ENCODE measurements at regions of chr9 and their contacts with region 1.

Region 1: DNA sequence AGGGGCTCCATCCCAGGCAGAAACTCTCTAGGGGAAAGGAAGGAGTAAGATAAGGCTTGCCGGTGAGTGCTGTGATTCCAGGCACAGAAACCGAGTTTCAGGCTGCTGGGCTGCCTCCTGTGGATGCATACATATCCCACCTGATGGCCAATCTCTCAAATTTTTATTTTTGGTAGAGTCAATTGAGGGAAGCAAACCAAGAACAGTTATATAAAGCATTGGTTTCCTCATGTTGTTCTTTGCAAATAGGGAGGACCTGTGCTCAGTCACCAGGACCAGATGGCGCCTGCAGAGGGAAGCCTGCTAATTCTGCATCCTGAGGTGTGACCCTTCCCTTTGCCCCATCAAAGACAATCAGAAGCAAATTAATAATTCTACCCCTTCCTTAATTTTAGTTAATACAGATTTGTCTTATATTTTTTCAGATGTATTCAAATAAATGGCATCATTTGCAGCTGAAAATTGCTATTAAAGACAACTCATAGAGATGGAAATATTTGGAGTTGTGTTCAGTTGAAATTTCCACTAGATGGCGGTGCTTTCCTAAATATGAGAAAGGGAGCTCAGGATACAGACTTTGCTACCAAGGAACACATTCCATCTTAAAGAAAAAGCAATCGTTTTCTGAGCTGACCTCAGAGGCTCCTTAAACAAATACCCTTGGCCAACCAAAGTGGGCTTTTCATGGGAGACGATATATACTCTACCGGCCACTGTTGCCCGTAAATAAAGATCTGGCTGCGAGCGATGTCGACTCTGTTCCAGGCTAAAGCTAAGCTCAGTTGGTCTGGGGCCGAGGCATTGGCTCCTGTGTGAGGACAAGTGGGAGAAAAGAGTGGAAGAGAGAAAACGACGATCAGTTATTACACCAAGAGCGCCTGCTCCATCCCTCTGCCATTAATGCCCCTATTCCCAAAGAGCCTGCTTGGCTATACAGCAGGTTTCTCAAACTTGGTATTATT is 225.7 kb upstream of the KLF9 start:
- DNase-seq: no peak
- H3K4me3 ChIP-seq: no peak overlapping the region
- H3K27ac ChIP-seq: no peak overlapping the region
- H3K4me1 ChIP-seq: no peaks in the 10 kb centered on the region
- H3K27me3 ChIP-seq: peaks cover 0 to 9% (median 0%) of the 10 kb centered on the region in 4 donors
- CTCF ChIP-seq: peak in 5 of 6 experiments; percentile 43 to 63 (median 51)
- POLR2A ChIP-seq: no peak

Region 2: GRCh38 chr9:70136632-70137031 is 503.5 kb before region 1 on chr9:
- intact Hi-C with region 1: no loop called
- DNase-seq: no peak
- H3K4me3 ChIP-seq: no peak overlapping the region
- H3K27ac ChIP-seq: no peak overlapping the region
- H3K4me1 ChIP-seq: no peaks in the 10 kb centered on the region
- H3K27me3 ChIP-seq: no peaks in the 10 kb centered on the region
- CTCF ChIP-seq: no peak
- POLR2A ChIP-seq: no peak

Region 3: DNA sequence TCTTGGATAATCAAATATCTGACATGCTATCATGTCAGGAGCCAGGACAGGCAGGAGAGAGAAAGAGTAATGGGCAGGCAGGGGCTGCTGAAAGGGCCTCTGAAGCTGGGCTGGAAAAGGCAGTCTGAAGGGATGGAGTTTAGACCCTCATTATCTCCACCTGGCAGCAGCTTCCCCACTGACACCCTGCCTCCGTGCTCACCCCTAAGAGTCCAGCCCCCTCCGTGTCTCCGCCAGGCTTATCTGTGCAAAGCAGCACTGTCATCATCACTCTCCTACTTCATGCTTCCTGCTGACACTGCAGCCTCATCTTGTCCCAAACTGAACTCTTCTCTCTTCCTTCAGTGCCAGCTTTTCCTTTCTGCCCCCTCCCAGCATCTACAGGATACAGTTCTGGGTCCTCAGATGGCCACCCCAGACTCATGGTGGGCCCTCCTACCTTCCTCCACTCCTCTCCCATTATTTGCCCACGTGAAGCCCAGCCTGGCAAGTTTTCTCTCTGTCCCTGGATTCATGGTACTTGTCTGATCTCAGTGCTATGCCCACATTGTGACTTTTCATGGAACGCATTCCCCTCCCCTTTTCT is 154.8 kb before region 1 on chr9:
- intact Hi-C with region 1: no loop called
- DNase-seq: no peak
- H3K4me3 ChIP-seq: no peak overlapping the region
- H3K27ac ChIP-seq: peak overlapping the region; percentile 66 to 97 (median 82)
- H3K4me1 ChIP-seq: peaks cover 23 to 81% (median 53%) of the 10 kb centered on the region in 3 donors
- H3K27me3 ChIP-seq: no peaks in the 10 kb centered on the region
- CTCF ChIP-seq: no peak
- POLR2A ChIP-seq: no peak

Region 4: DNA sequence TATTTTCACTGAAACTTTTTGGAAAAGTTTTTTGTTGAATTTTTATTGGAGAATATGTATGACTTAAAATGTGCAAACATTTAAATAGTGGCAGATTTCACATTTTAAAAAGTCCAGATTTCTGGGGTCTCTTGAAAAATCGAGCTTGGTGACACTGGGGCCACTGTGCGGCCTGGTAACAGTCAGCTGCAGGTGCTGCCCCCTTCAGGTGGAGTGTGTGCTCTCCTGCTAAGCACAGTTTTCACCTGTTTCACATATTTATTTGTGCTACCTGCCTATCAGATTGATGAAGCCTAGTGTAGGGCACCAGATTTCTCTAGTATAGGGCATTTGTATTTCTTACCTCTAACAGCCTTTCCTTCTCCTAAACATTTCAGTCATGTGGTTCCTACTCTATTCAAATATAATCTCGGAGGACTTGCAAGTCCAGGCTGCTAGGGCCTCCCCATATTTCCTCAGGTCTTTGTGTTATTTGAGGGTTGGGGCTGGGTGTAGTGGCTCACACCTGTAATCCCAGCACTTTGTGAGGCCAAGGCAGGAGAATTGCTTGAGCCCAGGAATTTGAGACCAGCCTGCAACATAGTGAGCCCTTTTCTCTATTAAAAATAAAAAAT is 129.9 kb before region 1 on chr9:
- intact Hi-C with region 1: no loop called
- DNase-seq: no peak
- H3K4me3 ChIP-seq: no peak overlapping the region
- H3K27ac ChIP-seq: no peak overlapping the region
- H3K4me1 ChIP-seq: no peaks in the 10 kb centered on the region
- H3K27me3 ChIP-seq: no peaks in the 10 kb centered on the region
- CTCF ChIP-seq: peak in 4 of 6 experiments; percentile 43 to 65 (median 46)
- POLR2A ChIP-seq: no peak

Region 5: GRCh38 chr9:70589571-70590314 is 50.4 kb before region 1 on chr9:
- intact Hi-C with region 1: no loop called
- DNase-seq: no peak
- H3K4me3 ChIP-seq: peak overlapping the region in 1 of 4 donors; percentile 29
- H3K27ac ChIP-seq: peak overlapping the region; percentile 51 to 88 (median 81)
- H3K4me1 ChIP-seq: peaks cover 0 to 45% (median 19%) of the 10 kb centered on the region in 3 donors
- H3K27me3 ChIP-seq: no peaks in the 10 kb centered on the region
- CTCF ChIP-seq: no peak
- POLR2A ChIP-seq: no peak

Region 6: GRCh38 chr9:71001780-71002386 is 361.7 kb after region 1 on chr9:
- intact Hi-C with region 1: loop called (anchors 5 kb)
- DNase-seq: no peak
- H3K4me3 ChIP-seq: no peak overlapping the region
- H3K27ac ChIP-seq: no peak overlapping the region
- H3K4me1 ChIP-seq: no peaks in the 10 kb centered on the region
- H3K27me3 ChIP-seq: no peaks in the 10 kb centered on the region
- CTCF ChIP-seq: peak in 5 of 6 experiments; percentile 26 to 52 (median 31)
- POLR2A ChIP-seq: no peak